ENCODE measurements at regions of chr20 and their contacts with region 1.

Region 1: DNA sequence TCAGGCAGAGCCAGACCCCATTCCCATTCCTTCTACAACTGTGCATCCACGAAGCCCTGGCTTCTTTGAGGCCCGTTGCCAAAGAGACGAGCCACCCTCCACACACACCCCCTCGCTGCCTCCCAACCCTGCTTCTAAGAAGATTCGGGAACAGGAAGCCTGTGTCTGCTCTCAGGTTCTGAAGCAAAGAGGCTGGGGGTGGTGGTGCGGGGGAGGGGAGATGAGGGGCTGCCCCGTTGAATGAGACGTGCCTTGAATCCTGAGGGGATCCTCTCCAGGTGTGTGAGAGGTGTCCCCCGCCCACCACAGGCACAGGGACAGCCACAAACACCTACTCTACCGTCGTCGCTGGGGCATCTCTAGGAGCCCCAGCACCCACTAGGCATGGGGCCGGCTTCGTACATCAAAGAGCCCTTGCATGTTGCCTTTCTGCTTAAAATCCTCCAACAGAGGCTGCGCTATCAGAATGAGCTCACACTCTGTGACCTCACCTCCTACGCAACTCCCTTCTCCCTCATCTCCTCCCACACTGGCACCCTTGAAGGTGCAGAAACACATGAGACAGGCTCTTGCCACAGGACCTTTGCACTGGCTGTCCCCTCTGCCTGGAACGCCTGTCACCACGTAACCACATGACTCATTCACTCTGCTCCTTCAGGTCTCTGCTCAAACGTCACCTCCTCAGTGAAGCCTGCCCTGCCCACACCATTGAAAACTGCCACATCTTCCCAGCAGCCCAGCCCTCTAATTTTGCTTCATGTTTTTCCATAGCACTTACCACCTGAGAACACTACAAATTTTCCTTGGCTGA is 58.5 kb downstream of the PREX1 start:
- DNase-seq: peak; percentile 98
- H3K4me3 Mint-ChIP-seq: peak overlapping the region; percentile 64
- H3K27ac Mint-ChIP-seq: peak overlapping the region; percentile 68
- H3K4me1 Mint-ChIP-seq: peaks cover 67% of the 10 kb centered on the region
- H3K27me3 Mint-ChIP-seq: no peaks in the 10 kb centered on the region

Region 2: GRCh38 chr20:48738399-48739304 is 30.6 kb before region 1 on chr20:
- CTCF ChIA-PET with region 1: no interaction called
- intact Hi-C with region 1: loop called (anchors 1 kb)
- DNase-seq: peak; percentile 88
- H3K4me3 Mint-ChIP-seq: no peak overlapping the region
- H3K27ac Mint-ChIP-seq: peak overlapping the region; percentile 79
- H3K4me1 Mint-ChIP-seq: peaks cover 32% of the 10 kb centered on the region
- H3K27me3 Mint-ChIP-seq: no peaks in the 10 kb centered on the region